ENCODE measurements at regions of chr17 and their contacts with region 1.

Region 1: DNA sequence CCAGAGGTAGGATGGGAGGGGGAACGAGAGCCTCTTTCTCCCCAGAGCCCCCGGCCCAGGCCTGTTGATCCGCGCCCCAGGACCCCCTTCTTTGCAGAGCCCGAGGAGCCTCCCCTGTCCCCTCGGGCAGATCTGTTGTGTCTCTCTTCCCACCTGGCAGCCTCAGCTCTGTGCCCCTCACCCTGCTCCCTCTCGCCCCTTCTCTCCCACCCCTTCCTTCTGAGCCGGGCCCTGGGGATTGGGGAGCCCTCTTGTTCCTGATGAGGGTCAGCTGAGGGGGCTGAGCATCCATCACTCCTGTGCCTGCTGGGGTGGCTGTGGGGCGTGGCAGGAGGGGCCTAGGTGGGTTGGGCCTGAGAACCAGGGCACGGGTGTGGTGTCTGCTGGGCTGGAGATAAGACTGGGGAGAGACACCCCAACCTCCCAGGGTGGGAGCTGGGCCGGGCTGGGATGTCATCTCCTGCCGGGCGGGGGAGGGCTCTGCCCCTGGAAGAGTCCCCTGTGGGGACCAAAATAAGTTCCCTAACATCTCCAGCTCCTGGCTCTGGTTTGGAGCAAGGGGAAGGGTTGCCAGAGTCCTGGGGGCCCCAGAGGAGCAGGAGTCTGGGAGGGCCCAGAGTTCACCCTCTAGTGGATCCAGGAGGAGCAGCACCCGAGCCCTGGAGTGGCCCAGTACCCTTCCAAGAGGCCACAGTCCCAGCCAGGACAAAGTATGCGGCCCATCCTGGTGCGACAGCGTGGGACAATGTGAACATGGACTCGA is 65.4 kb downstream of the MRC2 start:
- DNase-seq: peak; percentile 29
- H3K4me3 ChIP-seq: no peak overlapping the region
- H3K27ac ChIP-seq: no peak overlapping the region
- H3K4me1 ChIP-seq: no peaks in the 10 kb centered on the region
- H3K27me3 ChIP-seq: no peaks in the 10 kb centered on the region
- CTCF ChIP-seq: peak; percentile 44

Region 2: GRCh38 chr17:62562656-62563055 is 130.2 kb before region 1 on chr17:
- CTCF ChIA-PET with region 1: no interaction called
- POLR2A ChIA-PET with region 1: no interaction called
- intact Hi-C with region 1: loop called (anchors 10 kb)
- DNase-seq: peak; percentile 35
- H3K4me3 ChIP-seq: no peak overlapping the region
- H3K27ac ChIP-seq: no peak overlapping the region
- H3K4me1 ChIP-seq: no peaks in the 10 kb centered on the region
- H3K27me3 ChIP-seq: no peaks in the 10 kb centered on the region
- CTCF ChIP-seq: no peak

Region 3: DNA sequence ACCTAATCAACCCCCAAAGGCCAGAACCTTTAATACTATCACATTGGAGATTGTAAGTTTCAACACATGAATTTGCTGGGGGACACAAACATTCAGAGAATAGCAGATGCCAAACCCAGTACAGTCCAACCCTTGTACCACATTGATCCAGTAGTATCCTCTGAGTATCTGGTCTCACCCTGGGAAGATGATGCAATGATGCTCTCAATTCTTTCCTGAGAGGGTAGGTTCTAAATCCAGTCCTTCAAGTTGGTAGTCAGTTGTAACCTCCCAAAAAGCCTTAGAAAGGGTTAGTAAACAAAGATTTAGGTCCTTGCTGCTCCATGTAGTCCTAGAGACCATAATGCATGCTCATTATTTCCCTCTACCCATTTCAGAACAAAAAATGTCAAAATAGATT is 521.8 kb after region 1 on chr17:
- CTCF ChIA-PET with region 1: no interaction called
- POLR2A ChIA-PET with region 1: no interaction called
- intact Hi-C with region 1: no loop called
- DNase-seq: no peak
- H3K4me3 ChIP-seq: no peak overlapping the region
- H3K27ac ChIP-seq: no peak overlapping the region
- H3K4me1 ChIP-seq: no peaks in the 10 kb centered on the region
- H3K27me3 ChIP-seq: peaks cover 6% of the 10 kb centered on the region
- CTCF ChIP-seq: no peak

Measured in A673 (cell line).